BJ (cell line): ENCODE measurements at regions of chr18 and their contacts with region 1.

Region 1: GRCh38 chr18:54679318-54680149 is 88.5 kb downstream of the DYNAP start:
- DNase-seq: peak; percentile 32
- H3K4me3 ChIP-seq: no peak overlapping the region
- H3K27me3 ChIP-seq: no peaks in the 10 kb centered on the region
- CTCF ChIP-seq: peak; percentile 59

Region 2: DNA sequence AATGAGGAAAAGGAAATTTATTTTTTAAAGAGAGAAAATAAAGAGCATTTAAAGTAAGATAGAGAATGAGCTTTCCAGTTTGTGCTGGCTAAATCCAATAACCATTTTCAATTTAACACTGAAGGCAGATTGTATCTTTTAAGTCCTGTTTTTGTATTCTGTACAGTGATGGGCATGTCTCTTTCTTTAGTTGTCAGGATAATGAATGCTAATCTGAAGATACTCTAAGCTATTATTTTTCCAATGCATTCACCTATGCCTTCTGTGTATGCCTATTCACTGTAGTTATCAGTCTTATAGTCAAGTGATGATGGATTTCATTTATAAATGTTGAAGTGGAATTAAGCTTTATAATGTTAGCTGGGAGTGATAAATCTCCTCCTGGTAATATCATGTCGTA is 12.9 kb after region 1 on chr18:
- CTCF ChIA-PET with region 1: interaction called, 4 read pairs
- POLR2A ChIA-PET with region 1: interaction called, 10 read pairs
- DNase-seq: no peak
- H3K4me3 ChIP-seq: no peak overlapping the region
- H3K27me3 ChIP-seq: no peaks in the 10 kb centered on the region
- CTCF ChIP-seq: no peak